ENCODE measurements at regions of chr17 and their contacts with region 1.

Region 1: DNA sequence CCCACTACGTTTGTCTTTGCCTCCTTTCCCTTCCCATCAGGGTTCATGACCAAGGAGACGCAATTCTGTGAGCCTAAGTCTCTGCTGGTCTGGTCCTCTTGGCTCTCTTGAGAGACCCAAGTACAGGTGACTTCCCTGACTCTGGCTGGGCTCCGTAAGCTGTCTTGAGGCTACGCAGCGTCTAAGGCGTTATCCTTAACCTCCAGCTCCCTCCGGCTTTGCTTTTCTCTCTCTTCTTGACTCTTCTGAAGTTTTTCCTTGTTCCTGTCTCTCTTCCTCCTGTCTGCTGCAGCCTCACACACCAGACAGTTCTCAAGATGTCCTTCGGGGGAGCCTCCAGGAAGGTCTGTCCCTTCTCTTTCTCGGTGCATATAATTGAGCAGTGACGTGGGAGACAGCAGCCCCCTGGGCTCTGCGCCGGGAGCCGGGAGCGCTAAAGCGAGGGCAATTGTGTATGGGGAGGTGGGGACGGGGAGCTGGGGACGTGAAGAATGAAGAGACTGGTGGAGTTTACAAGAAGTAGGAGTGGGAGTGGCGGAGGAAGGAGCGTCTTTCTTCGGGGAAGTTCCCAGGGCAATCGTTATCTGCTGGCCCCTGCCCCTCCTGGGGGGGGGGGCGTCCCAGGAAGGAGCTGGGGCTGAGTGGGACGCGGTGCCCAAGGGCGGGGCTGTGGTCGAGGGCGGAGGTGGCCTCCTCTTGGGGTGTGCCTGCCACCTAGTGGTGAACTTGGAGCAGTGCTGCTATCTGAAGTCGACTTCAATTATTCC is 6.9 kb upstream of the PIRT start:
- DNase-seq: peak; percentile 45
- ATAC-seq: peak; percentile 90
- H3K4me3 ChIP-seq: peak overlapping the region in 1 of 3 experiments; percentile 53; a peak in 1 of 6 replicates
- H3K27ac ChIP-seq: no peak overlapping the region
- H3K4me1 ChIP-seq: peaks cover 10% of the 10 kb centered on the region
- H3K27me3 ChIP-seq: peaks cover 3 to 15% of the 10 kb centered on the region in 2 experiments; a peak in 2 of 5 replicates
- CTCF ChIP-seq: peak; percentile 93
- EP300 ChIP-seq: no peak
- POLR2A ChIP-seq: no peak
- RAD21 ChIP-seq: peak; percentile 83

Region 2: GRCh38 chr17:10646392-10646990 is 198.3 kb before region 1 on chr17:
- CTCF ChIA-PET with region 1: interaction called, 15 read pairs
- POLR2A ChIA-PET with region 1: no interaction called
- in situ Hi-C with region 1: loop called (anchors 5 kb)
- intact Hi-C with region 1: loop called (anchors 1 kb)
- DNase-seq: peak; percentile 58
- ATAC-seq: peak; percentile 85
- H3K4me3 ChIP-seq: no peak overlapping the region
- H3K27ac ChIP-seq: no peak overlapping the region
- H3K4me1 ChIP-seq: no peaks in the 10 kb centered on the region
- H3K27me3 ChIP-seq: no peaks in the 10 kb centered on the region
- CTCF ChIP-seq: peak; percentile 85
- EP300 ChIP-seq: no peak
- POLR2A ChIP-seq: no peak
- RAD21 ChIP-seq: peak; percentile 56; the same call in 1 of the 2 replicates

Region 3: DNA sequence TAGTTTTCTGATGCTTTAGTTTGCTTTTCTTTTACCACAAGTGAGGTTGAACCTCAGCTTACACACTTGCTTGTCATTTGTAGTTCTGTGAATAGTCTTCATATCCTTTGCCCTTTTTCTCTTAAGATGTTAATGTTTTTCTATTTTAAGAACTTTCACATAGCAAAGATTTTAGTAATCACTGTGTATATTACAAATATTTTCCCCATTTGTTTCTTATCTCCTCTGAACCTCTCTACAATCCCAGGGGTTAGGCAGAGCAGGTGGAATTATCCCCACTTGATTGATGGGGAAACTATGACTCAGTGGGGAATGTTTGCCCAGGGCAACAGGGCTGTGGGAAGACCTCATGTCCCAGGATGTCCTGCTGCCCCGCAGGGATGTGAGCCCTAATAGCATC is 176.0 kb before region 1 on chr17:
- CTCF ChIA-PET with region 1: no interaction called
- POLR2A ChIA-PET with region 1: no interaction called
- in situ Hi-C with region 1: no loop called
- intact Hi-C with region 1: no loop called
- DNase-seq: no peak
- ATAC-seq: no peak
- H3K4me3 ChIP-seq: no peak overlapping the region
- H3K27ac ChIP-seq: no peak overlapping the region
- H3K4me1 ChIP-seq: no peaks in the 10 kb centered on the region
- H3K27me3 ChIP-seq: no peaks in the 10 kb centered on the region
- CTCF ChIP-seq: no peak
- EP300 ChIP-seq: no peak
- POLR2A ChIP-seq: no peak
- RAD21 ChIP-seq: no peak

Region 4: GRCh38 chr17:10737168-10737622 is 107.6 kb before region 1 on chr17:
- CTCF ChIA-PET with region 1: interaction called, 43 read pairs
- POLR2A ChIA-PET with region 1: no interaction called
- in situ Hi-C with region 1: loop called (anchors 5 kb)
- intact Hi-C with region 1: loop called (anchors 1 kb)
- DNase-seq: peak; percentile 81
- ATAC-seq: peak; percentile 82
- H3K4me3 ChIP-seq: peak overlapping the region in 1 of 3 experiments; percentile 11; a peak in 1 of 6 replicates
- H3K27ac ChIP-seq: no peak overlapping the region
- H3K4me1 ChIP-seq: peaks cover 30% of the 10 kb centered on the region
- H3K27me3 ChIP-seq: peaks cover 0 to 8% of the 10 kb centered on the region in 2 experiments; a peak in 2 of 5 replicates
- CTCF ChIP-seq: peak; percentile 90
- EP300 ChIP-seq: peak in 1 of 2 experiments; percentile 22; a peak in 1 of 4 replicates
- POLR2A ChIP-seq: no peak
- RAD21 ChIP-seq: peak; percentile 74

Region 5: DNA sequence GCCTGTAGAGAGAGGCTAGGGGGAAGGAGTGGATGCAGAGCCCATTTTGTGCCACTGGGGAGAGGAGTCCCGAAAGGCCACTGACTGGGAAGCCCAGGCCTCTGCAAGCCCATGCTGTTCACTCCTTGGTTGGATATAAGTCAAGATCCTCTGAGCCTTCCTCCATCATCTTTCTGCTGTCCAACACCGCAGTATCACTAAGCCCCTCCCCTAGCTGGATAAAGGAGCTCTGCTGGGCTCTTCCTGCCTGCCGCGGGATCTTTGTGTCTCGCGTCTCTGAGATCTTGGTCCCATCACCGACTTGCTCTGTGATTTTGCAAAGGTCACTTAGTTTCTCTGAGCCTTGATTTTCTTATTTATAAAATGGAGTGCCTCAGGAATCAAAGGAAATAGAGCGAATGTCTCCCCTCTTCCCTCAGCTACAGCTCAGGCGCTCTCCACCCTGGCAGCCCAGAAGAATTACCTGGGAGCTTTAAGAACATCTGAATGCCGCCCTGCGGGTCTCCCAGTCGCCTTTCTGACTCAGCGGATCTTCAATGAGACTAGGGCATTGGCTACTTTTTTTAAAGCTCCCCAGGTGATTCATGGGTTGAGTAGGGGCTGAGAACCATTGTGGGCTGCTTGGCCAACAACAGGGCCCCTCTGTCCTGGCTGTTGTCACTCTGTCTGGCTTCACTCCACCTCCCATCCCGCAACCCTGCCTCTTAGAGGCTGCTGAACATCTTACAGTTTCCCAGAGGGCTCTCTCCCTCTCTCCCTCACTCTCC is 89.8 kb before region 1 on chr17:
- CTCF ChIA-PET with region 1: interaction called, 4 read pairs
- POLR2A ChIA-PET with region 1: no interaction called
- in situ Hi-C with region 1: no loop called
- intact Hi-C with region 1: loop called (anchors 5 kb)
- DNase-seq: no peak
- ATAC-seq: no peak
- H3K4me3 ChIP-seq: no peak overlapping the region
- H3K27ac ChIP-seq: no peak overlapping the region
- H3K4me1 ChIP-seq: peaks cover 37% of the 10 kb centered on the region
- H3K27me3 ChIP-seq: peaks cover 2 to 3% of the 10 kb centered on the region in 2 experiments; a peak in 2 of 5 replicates
- CTCF ChIP-seq: no peak
- EP300 ChIP-seq: no peak
- POLR2A ChIP-seq: no peak
- RAD21 ChIP-seq: no peak

Region 6: GRCh38 chr17:10772425-10773380 is 72.1 kb before region 1 on chr17:
- CTCF ChIA-PET with region 1: interaction called, 8 read pairs
- POLR2A ChIA-PET with region 1: no interaction called
- in situ Hi-C with region 1: no loop called
- intact Hi-C with region 1: loop called (anchors 2 kb)
- DNase-seq: peak; percentile 33
- ATAC-seq: no peak
- H3K4me3 ChIP-seq: no peak overlapping the region
- H3K27ac ChIP-seq: no peak overlapping the region
- H3K4me1 ChIP-seq: peaks cover 20% of the 10 kb centered on the region
- H3K27me3 ChIP-seq: no peaks in the 10 kb centered on the region
- CTCF ChIP-seq: peak; percentile 79
- EP300 ChIP-seq: no peak
- POLR2A ChIP-seq: no peak
- RAD21 ChIP-seq: no peak

Region 7: DNA sequence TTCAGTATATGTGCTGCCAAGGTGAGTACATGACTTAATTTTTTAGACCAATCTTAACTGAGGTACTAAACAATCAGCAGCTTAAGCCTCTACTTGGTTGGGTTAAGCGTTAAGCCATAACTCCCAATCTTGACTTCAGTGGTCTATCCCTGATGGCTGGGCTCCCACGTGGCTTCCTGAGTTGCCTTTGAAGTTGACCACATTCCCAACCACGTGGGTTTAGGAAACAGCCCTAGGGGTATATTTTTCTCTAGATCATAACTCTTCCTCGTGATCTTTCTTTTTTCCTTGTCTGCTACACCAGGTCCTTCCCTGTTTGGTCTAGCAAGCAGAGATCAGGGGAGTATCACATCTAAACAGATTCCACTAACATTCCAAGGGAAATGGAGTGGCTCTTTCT is 13.2 kb after region 1 on chr17:
- CTCF ChIA-PET with region 1: no interaction called
- POLR2A ChIA-PET with region 1: no interaction called
- in situ Hi-C with region 1: no loop called
- intact Hi-C with region 1: no loop called
- DNase-seq: no peak
- ATAC-seq: no peak
- H3K4me3 ChIP-seq: no peak overlapping the region
- H3K27ac ChIP-seq: no peak overlapping the region
- H3K4me1 ChIP-seq: no peaks in the 10 kb centered on the region
- H3K27me3 ChIP-seq: 0 out of 5 replicates have a peak, but pooled peaks cover 0 to 3% of the 10 kb centered on the region in 2 experiments
- CTCF ChIP-seq: no peak
- EP300 ChIP-seq: no peak
- POLR2A ChIP-seq: no peak
- RAD21 ChIP-seq: no peak